GM18951 (cell line): ENCODE measurements at regions of chr20 and their contacts with region 1.

Region 1: GRCh38 chr20:23441850-23442313 is 2.4 kb downstream of the CSTL1 start:
- POLR2A ChIP-seq: no peak

Region 2: GRCh38 chr20:23086056-23086566 is 355.8 kb before region 1 on chr20 and contains the start of gene CD93:
- in situ Hi-C with region 1: no loop called
- POLR2A ChIP-seq: no peak

Region 3: DNA sequence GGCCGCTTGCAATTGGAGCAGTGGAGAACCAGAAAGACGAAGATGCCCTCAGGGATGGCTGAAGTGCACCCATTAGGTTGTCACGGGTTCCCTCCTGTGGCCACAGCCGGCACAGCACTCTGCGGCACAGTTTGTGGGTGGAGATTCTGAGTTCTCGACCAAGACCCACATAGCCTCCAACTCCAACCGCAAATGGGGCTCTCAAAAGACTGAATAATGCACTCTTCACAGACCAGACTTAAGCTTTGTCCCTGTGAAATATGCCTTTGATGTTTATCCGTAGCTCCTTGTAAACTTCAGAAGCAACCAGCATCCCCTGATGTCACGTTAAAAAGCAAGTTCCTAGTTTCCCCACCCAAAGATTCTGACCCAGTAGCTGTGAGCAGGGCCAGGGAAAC is 164.8 kb after region 1 on chr20:
- in situ Hi-C with region 1: loop called (anchors 25 kb)
- POLR2A ChIP-seq: no peak